Psoas muscle (tissue), 8 donors: ENCODE measurements at regions of chr15 and their contacts with region 1.

Region 1: DNA sequence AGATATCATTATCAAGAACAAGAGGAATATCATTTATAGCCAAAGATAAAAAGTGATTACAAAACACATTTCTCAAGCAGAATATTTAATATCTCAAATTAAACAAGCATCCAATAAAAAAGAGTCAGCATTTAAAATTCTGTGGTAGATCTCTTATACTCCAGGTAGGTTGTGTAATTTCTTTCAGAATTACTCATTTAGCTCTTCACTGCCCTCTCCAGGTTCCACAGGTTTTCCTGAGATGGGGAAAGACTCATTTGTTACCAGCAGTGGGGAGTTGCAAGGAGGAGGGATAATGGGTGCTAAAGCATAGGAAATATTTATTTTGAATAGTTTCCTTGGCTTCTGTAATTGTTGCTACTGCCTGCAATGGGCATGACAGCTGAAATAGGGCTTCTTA is 83.1 kb upstream of the RASGRP1 start:
- DNase-seq: no peak
- ATAC-seq: no peak
- H3K4me3 ChIP-seq: no peak overlapping the region
- H3K27ac ChIP-seq: no peak overlapping the region
- H3K4me1 ChIP-seq: no peaks in the 10 kb centered on the region
- H3K27me3 ChIP-seq: peaks cover 0 to 2% (median 0%) of the 10 kb centered on the region in 3 donors
- CTCF ChIP-seq: no peak

Region 2: DNA sequence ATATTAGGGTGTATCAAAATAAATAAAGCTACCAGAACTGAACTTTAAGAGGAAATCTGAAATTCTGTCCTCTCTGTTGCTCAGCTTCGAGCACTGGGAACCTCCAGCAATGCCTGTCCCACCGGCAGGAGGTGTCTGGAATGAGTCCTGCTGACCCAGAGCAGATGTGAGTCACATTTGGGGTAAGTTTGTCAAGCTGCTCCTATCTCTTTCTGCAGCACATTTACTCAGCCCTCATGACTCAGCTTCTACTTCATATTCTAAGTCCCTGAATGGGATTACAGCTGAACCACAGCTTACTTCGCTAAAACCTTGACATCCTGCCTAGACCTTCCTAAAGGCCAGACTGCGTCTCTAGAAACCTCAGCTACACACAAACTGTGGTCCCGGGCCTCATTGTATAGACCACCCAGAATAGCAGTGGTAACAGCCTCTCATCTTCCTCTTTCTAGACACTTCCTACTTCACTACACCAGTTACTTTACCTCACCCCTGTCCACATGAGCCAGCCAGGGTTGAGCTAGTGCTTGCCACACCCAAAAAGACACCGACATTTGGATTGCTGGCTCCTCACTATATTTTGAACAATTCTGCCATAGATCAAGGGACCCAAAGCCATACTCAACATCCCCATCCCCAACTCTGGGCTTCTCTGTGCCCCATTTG is 822.8 kb before region 1 on chr15:
- intact Hi-C with region 1: loop called in 1 of 2 experiments (anchors 5 kb)
- DNase-seq: peak in 1 of 2 donors; percentile 10
- ATAC-seq: peak in 1 of 4 donors; percentile 54
- H3K4me3 ChIP-seq: no peak overlapping the region
- H3K27ac ChIP-seq: no peak overlapping the region
- H3K4me1 ChIP-seq: no peaks in the 10 kb centered on the region
- H3K27me3 ChIP-seq: no peaks in the 10 kb centered on the region
- CTCF ChIP-seq: no peak